ENCODE measurements at regions of chr12 and their contacts with region 1.

Region 1: GRCh38 chr12:69570545-69571399 is 14.5 kb upstream of the CCT2 start:
- DNase-seq: peak; percentile 65
- H3K4me3 Mint-ChIP-seq: no peak overlapping the region
- H3K27ac Mint-ChIP-seq: no peak overlapping the region
- H3K4me1 Mint-ChIP-seq: peaks cover 5% of the 10 kb centered on the region
- H3K27me3 Mint-ChIP-seq: no peaks in the 10 kb centered on the region

Region 2: GRCh38 chr12:69290545-69291277 is 280.1 kb before region 1 on chr12:
- CTCF ChIA-PET with region 1: interaction called, 21 read pairs
- DNase-seq: peak; percentile 90
- H3K4me3 Mint-ChIP-seq: no peak overlapping the region
- H3K27ac Mint-ChIP-seq: no peak overlapping the region
- H3K4me1 Mint-ChIP-seq: peaks cover 5% of the 10 kb centered on the region
- H3K27me3 Mint-ChIP-seq: peaks cover 35% of the 10 kb centered on the region

Region 3: GRCh38 chr12:69359531-69360347 is 211.0 kb before region 1 on chr12 and contains the start of gene YEATS4:
- CTCF ChIA-PET with region 1: interaction called, 52 read pairs
- DNase-seq: peak; percentile 93
- H3K4me3 Mint-ChIP-seq: peak within 1 kb of the TSS; percentile 89
- H3K27ac Mint-ChIP-seq: peak within 1 kb of the TSS; percentile 94
- H3K4me1 Mint-ChIP-seq: peaks cover 38% of the 10 kb centered on the region
- H3K27me3 Mint-ChIP-seq: peaks cover 3% of the 10 kb centered on the region

Region 4: DNA sequence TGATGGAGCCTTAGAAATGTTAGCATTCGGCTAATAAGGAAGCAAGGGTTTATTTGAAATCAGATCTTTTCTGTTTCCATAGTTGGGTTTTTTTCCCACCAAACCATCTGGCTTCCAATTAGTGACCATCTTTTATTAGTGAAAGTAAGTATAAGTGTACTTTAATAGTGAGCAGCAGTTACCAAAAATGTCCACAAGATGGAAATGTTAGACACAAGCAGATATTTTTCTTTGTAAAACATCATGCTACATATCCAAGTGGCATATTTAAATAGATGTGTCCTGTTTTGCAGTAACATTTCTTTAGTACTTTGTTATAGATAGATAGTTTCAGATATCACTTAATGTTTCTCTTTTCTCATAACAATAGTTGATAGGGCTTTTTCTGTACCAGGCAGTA is 182.4 kb before region 1 on chr12:
- CTCF ChIA-PET with region 1: interaction called, 12 read pairs
- DNase-seq: no peak
- H3K4me3 Mint-ChIP-seq: no peak overlapping the region
- H3K27ac Mint-ChIP-seq: no peak overlapping the region
- H3K4me1 Mint-ChIP-seq: no peaks in the 10 kb centered on the region
- H3K27me3 Mint-ChIP-seq: no peaks in the 10 kb centered on the region

Region 5: GRCh38 chr12:69470189-69471075 is 100.3 kb before region 1 on chr12 and contains the start of gene FRS2:
- CTCF ChIA-PET with region 1: interaction called, 10 read pairs
- DNase-seq: peak; percentile 92
- H3K4me3 Mint-ChIP-seq: peak within 1 kb of the TSS; percentile 97
- H3K27ac Mint-ChIP-seq: peak within 1 kb of the TSS; percentile 95
- H3K4me1 Mint-ChIP-seq: peaks cover 34% of the 10 kb centered on the region
- H3K27me3 Mint-ChIP-seq: no peaks in the 10 kb centered on the region

Region 6: GRCh38 chr12:69555461-69555860 is 15.3 kb before region 1 on chr12:
- CTCF ChIA-PET with region 1: interaction called, 13 read pairs
- DNase-seq: no peak
- H3K4me3 Mint-ChIP-seq: no peak overlapping the region
- H3K27ac Mint-ChIP-seq: no peak overlapping the region
- H3K4me1 Mint-ChIP-seq: no peaks in the 10 kb centered on the region
- H3K27me3 Mint-ChIP-seq: no peaks in the 10 kb centered on the region

Region 7: GRCh38 chr12:69583203-69583602 is 12.4 kb after region 1 on chr12:
- CTCF ChIA-PET with region 1: interaction called, 22 read pairs
- DNase-seq: no peak
- H3K4me3 Mint-ChIP-seq: no peak overlapping the region
- H3K27ac Mint-ChIP-seq: no peak overlapping the region
- H3K4me1 Mint-ChIP-seq: peaks cover 17% of the 10 kb centered on the region
- H3K27me3 Mint-ChIP-seq: no peaks in the 10 kb centered on the region

Region 8: DNA sequence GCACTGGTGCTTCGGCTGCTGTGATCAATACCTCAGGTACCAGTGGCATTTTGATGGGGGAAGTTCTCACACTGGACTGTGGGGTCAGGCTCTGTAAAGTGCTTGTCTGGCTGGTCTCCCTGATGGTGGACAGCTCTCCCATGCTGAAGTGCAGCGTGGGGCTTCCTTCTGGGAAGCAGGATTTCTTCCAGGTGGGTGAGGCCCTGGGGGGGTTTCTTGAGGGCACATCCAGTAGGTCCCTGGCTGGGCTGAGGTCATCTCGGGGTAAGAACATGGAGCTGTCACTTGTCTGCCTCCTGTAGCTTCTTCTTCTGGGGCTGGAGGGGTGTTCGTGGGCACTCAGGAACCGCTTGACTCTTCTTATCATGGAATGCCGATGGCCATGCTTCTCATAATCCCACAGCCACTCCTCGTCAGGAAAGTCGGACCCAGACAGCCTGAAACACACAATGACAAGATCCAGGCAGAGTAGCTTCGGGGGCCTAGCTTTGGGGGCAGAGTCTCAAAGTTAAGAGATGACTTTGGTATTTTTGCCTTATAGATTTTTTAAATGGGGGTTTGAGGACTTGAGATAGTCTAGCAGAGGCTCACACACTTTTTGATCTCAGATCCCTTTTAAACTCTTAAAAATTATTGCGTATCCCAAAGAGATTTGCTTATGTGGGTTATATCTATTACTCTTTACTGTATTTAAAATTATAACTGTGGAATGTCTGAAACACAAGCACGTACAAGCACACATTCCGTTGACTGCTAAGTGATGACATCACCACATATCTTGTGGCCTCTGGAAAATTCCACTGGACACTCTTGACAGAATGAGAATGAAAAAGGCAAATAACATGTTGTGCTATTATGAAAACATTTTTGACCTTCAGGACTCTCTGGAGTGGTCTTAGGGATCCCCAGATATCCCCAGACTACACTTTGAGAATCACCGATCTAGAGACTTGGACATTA is 84.9 kb after region 1 on chr12:
- CTCF ChIA-PET with region 1: no interaction called
- DNase-seq: no peak
- H3K4me3 Mint-ChIP-seq: no peak overlapping the region
- H3K27ac Mint-ChIP-seq: no peak overlapping the region
- H3K4me1 Mint-ChIP-seq: no peaks in the 10 kb centered on the region
- H3K27me3 Mint-ChIP-seq: peaks cover 12% of the 10 kb centered on the region

Region 9: DNA sequence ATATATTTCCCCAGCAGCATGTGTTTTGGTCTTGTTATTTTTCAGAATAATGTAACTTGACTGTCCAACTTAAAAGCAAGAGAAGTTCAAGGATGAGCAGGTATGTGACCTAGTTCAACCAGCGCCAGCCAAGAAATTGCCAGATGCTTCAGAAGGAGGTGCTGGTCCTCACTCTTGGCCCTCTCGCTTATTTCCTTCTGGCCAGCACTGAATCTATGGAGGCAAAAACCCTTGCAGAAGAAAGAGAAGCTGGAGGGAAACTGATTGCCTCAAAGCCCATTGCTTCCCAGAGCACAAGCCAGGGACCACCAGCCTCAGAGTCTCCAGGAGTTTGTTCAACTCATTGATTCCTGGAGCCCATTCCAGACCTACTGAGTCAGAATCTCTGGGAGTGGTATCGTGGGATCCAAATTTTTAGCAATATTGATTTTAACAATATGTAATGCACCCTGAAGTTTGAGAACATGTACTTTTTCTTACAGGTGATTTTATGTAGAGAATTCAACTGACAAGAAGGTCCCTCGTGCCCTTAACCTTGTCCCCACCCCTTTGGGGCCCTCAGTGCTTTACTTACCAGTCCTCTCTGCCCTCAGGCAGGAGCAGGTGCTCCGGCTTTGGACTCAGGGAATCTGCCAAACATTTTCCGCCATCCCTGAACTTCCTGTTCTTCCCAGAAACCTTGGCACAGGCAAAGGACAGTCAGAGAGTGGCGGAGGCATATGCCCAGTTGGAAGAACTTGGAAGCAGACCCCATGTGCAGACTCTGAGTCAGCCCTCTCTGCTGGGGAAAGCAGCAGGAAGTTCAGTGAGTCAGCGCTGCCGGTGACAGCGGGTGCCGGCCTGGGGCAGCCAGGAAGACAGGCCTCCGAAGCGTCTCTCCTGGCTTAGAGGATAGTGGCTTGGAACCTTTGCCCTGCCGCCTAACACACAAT is 118.0 kb after region 1 on chr12:
- CTCF ChIA-PET with region 1: no interaction called
- DNase-seq: peak; percentile 27
- H3K4me3 Mint-ChIP-seq: no peak overlapping the region
- H3K27ac Mint-ChIP-seq: no peak overlapping the region
- H3K4me1 Mint-ChIP-seq: peaks cover 4% of the 10 kb centered on the region
- H3K27me3 Mint-ChIP-seq: peaks cover 19% of the 10 kb centered on the region